AG04450 (cell line): ENCODE measurements at regions of chr6 and their contacts with region 1.

Region 1: DNA sequence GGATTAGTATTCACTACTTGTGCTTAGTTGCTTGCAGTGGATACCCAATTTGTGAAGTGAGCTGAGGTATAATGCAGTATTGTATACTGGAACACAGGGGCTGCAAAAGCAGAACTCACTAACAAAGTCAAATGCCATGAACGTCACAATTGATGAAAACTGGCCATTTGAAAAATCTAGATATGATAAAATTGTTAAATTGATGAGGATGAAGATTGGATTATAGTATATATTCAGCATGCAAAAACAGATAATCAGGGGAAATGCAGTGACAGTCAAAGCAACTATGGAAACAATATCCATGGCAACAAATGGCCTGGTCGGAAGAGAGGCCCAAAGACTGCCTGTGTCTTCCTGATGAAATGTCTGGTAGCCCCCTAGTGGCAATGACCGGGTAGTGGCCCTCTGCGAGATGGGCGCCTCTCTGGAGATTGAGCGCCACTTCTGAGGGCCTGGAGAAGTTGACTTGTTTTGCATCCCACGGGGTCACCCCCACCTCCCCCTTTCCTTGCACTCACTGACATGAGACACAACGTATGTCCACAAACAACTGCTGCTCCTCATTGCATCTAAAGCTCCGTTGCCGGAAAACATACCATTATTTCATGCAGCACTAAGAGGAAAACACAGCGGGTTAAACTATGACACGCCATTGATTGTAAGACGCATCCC is 43.6 kb downstream of the C6orf15 start:
- DNase-seq: peak; percentile 52
- H3K4me3 ChIP-seq: no peak overlapping the region
- H3K27ac ChIP-seq: no peak overlapping the region
- H3K27me3 ChIP-seq: peaks cover 4% of the 10 kb centered on the region
- CTCF ChIP-seq: peak; percentile 96

Region 2: DNA sequence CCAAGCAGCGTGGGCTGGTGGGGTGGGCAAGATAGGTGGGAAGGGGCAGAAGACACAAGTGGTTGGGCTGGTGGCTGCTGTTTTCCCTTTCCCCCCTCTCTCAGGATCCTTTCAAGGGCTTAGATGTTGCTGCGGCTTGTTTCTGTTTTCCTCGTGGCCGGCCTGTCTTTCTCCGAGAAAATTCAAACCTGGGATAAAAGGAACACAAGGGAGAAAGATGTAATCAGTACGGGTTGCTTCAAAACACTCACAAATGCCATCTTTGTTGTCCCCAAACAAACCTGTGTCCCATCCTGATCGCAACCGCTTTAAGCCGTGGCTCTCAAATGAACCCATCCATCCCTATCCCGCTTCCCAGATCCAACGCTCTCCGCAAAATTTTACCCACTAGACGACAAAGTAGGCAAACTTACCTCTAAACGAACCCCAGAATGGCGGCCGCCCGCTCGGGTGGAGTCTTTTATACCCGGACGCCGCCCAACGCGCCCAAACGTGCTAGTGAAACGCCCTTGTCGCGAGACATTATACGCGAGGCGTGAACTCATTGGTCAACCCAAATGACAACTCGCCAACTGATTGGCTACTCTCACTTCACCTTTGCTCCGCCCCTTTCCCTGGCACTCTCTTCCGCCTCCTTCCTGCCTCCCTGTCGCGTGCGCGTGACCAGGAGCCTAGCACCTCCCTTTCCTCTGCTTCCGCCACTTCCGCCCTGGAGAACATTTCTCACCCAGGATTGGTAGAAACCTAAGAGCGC is 451.8 kb before region 1 on chr6 and contains the start of gene PPP1R10:
- CTCF ChIA-PET with region 1: no interaction called
- POLR2A ChIA-PET with region 1: no interaction called
- DNase-seq: peak; percentile 100
- H3K4me3 ChIP-seq: peak within 1 kb of the TSS; percentile 94
- H3K27ac ChIP-seq: peak within 1 kb of the TSS; percentile 98
- H3K27me3 ChIP-seq: no peaks in the 10 kb centered on the region
- CTCF ChIP-seq: no peak
- polyA plus RNA-seq, gene PPP1R10: 32.9 and 43.2 TPM in 2 replicates

Region 3: DNA sequence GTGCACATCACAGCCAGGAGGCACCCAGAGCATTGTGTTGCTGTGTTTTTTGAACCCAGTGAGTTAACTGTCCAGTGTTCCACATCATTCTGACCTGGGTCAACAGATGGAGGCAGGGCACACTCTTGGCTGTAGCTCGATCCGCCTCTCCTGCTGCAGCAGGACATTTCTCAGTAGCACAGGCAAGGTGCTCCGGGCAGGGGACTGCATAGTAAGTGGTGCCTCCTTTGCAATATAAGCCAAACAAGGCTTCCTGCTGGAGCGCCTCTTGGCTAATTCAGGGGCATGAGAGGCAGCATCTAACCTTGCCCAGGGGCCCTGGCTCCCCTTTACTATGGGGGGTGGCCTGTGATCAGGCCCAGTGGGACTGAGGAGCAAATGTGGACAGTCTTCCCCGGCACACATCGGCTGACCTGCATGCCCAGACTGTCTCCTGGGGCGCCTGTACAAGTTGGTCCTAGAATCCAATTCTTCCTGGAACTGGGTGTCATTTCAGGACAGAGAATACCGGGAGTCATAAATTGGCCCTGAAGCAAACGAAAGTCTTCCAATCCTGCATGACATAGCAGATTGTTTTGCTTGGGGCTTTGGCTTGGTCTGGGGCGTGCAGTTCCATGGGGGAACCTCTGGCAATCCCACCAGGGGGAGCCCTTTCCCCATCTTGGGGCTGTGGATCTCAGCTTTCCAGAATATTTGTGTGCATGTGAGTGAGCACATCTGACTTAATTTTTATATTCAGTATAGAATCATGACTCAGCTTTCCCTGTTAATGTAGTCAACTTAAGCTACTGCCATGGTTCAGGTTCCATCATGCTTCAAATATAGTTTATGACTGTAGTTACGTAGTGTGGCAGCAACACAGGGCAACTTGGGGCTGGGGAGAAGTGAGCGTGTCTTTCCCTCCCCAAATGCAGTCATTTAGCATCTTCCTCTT is 240.5 kb before region 1 on chr6:
- CTCF ChIA-PET with region 1: interaction called, 23 read pairs
- POLR2A ChIA-PET with region 1: no interaction called
- DNase-seq: peak; percentile 84
- H3K4me3 ChIP-seq: no peak overlapping the region
- H3K27ac ChIP-seq: peak overlapping the region; percentile 78
- H3K27me3 ChIP-seq: no peaks in the 10 kb centered on the region
- CTCF ChIP-seq: peak; percentile 97

Region 4: DNA sequence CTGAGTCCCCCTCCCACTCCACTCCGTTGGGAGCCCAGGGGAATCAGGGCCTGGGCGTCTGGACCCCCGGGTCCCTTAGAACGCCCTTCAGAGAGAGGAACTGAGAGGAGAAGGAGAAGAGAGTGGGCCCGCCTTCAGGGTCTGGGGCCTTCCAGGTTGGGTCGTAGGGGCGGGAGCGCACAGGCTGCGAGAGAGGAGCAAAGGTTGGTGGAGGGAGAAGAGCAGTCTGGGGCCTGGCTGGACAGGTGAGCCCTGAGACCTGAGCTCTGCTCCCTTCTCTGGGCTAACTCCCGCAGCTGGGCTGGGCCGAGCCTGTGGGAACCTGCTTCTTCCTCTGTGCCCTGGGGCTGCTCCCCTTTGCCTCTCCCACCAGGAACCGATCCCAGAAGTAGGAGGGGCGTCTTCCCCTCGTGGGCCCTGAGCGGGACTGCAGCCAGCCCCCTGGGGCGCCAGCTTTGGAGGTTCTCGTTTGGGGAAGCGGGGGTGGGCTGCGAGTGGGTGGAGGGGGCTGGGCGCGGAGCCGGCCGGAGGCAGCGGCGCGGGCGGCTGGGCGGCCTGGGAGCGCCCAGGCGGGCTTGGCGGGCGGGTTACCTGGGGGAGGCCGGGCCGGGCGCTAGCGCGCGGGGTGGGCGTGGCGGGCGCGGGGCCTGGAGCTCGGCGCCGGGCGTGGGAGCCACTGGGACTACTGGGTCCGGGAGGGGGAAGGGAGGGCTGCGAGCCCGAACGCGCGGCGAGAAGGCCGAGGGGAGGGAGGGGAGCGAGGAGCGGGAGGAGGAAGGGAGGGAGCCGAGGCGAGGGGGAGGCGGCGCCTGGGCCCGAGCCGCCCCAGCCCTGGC is 184.9 kb before region 1 on chr6 and contains the start of gene DDR1:
- CTCF ChIA-PET with region 1: interaction called, 10 read pairs
- POLR2A ChIA-PET with region 1: no interaction called
- DNase-seq: no peak
- H3K4me3 ChIP-seq: peak within 1 kb of the TSS; percentile 83
- H3K27ac ChIP-seq: no peak within 1 kb of the TSS
- H3K27me3 ChIP-seq: no peaks in the 10 kb centered on the region
- CTCF ChIP-seq: no peak
- polyA plus RNA-seq, gene DDR1: 9.9 and 13.3 TPM in 2 replicates

Region 5: DNA sequence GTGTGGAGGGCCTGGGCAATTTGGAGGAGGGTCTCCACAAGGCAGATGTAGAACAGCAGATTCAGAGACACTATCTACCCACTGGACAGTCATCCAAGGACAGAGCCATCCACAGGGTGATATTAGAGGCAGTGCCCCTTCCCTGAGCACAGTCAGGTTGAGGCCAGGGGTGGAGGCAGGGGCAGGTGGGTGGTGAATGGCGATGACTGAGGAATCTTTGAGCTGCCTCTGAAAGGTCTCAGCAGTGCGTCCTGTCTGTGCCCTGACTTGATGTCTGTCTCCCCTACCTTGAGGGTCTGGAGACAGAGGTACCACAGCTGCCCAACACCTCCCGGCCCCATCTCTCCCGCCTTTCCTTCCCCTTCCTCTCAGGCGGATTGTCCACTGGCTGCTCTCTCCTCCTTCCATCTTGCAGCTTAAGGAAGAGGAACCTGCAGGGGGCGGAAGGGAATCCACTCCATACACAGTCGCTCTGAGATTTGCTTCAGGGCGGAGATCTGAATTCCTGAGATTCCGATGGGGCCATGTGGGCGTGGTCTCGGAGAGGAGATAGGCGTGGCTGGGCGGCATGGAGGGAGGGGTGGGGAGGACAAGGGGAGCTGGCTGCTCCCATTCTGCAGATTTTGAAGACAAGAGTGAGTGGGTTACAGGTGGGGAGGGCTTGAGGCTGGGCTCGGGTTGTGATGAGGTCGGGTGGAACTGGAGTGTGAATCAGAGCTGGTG is 126.3 kb before region 1 on chr6:
- CTCF ChIA-PET with region 1: interaction called, 63 read pairs
- POLR2A ChIA-PET with region 1: no interaction called
- DNase-seq: peak; percentile 44
- H3K4me3 ChIP-seq: 0 out of 2 replicates have a peak overlapping the region, but pooled peaks have one; percentile 5
- H3K27ac ChIP-seq: no peak overlapping the region
- H3K27me3 ChIP-seq: peaks cover 51% of the 10 kb centered on the region
- CTCF ChIP-seq: peak; percentile 78

Region 6: GRCh38 chr6:31042806-31043205 is 26.0 kb before region 1 on chr6:
- CTCF ChIA-PET with region 1: interaction called, 12 read pairs
- POLR2A ChIA-PET with region 1: no interaction called
- DNase-seq: no peak
- H3K4me3 ChIP-seq: no peak overlapping the region
- H3K27ac ChIP-seq: no peak overlapping the region
- H3K27me3 ChIP-seq: peaks cover 10% of the 10 kb centered on the region
- CTCF ChIP-seq: peak; percentile 78

Region 7: DNA sequence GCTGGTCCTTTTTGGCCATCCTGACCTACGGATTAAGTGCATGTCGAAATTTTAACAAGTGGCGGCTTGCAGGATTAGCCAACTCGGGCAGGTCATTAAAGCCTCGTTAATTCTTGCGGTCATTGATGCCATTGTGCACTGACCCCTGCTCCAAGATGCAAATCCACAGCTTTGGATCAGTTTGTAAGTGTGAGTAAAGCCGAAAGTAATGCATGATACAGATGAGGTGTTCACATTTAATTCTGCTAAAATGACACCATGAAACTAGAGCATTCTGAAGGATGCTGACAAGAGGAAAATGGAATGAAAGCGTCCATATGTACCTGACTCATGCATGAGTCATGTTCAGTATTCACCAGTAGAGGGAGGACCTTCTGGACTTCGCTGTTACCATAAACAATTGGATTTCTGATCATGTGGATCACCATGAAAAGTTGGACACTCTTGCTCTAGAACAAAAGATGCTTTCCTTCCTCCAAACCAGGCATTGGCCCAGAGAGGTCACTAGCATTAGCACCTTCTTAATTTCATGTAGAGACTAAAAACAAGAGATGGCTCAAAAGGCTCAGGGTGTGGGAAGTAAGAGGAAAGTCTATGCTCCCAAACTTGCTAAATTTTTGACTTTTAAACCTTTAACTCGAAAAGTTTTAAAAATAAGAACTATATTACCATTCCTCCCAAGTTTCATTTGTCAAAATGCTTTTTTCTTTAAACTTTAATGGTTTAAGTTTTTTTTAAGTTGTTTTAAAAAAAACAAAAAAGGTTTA is 10.5 kb before region 1 on chr6:
- CTCF ChIA-PET with region 1: interaction called, 32 read pairs
- POLR2A ChIA-PET with region 1: no interaction called
- DNase-seq: peak; percentile 87
- H3K4me3 ChIP-seq: no peak overlapping the region; the same call in 1 of the 2 replicates
- H3K27ac ChIP-seq: peak overlapping the region; percentile 90
- H3K27me3 ChIP-seq: peaks cover 3% of the 10 kb centered on the region
- CTCF ChIP-seq: peak; percentile 59

Region 8: DNA sequence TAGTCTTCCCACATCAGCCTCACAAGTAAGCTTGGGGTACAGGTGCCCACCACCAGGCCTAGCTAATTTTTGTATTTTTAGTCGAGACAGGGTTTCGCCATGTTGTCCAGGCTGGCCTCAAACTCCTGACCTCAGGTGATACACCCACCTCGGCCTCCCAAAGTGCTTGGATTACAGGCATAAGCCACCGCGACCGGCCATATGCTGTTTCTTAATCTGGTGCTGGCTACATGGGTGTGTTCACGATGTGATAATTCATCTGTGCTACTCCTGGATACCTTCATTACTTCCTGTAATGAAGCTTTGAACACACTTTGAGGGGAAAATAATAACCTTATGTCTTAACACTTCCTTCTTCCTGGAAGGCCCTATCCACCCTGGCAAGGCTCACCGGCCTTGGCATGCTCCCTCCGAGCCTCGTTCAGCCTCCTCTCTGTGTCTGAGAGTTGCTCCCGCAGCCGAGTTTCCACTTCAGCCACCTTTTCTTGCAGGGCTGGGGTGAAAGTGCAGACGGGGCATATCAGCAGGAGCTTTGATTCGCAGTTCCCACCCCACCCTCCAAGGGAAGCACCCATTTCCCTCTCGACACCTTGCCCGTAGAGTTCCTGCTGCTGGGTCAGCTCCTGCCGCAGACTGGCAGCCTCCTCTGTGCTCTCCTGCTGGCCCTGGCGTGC is 75.6 kb after region 1 on chr6:
- CTCF ChIA-PET with region 1: no interaction called
- POLR2A ChIA-PET with region 1: no interaction called
- DNase-seq: no peak
- H3K4me3 ChIP-seq: no peak overlapping the region
- H3K27ac ChIP-seq: no peak overlapping the region
- H3K27me3 ChIP-seq: no peaks in the 10 kb centered on the region
- CTCF ChIP-seq: no peak